ENCODE measurements at regions of chr15 and their contacts with region 1.

Region 1: DNA sequence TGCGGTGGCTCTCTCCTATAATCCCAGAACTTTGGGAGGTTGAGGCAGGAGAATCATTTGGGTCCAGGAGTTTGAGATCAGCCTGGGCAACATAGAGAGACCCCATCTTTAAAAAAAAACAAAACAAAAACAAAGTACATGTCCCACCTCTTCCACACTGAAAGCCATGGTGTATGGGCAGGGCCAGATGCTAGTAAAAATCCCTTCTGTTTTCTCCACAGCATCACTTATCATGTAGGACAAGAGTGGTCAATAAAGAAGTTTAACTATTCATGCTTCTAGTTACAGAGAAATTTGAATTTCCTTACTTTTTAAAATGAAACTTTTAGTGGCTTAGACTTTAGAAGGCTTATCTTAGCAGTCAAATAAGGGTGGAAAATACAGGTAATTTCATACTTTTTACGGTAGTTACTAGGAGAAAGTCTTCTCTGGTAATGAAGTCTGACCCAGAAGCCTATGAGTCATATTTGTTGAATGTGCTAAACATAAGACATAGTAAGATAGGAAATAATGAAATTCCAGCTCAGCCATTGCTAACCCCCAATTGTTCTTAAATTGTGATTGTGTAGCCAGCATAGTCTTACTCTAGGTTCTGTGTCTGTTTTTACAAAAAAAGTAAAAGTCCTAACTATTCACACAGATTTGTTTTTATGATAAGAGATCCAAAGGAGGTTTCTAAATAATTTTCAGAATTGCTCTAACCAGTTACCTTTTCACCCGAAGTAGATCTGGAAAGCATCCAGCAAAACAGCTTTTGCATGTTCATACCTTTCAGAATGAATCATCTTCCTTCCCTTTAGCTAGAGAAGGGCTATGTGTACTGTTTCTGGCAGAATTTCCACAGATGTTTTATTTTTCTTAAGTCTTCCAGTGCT is 16.4 kb upstream of the ZNF609 start:
- DNase-seq: no peak
- H3K4me3 Mint-ChIP-seq: peak overlapping the region; percentile 74
- H3K27ac Mint-ChIP-seq: peak overlapping the region; percentile 94
- H3K4me1 Mint-ChIP-seq: peaks cover 49% of the 10 kb centered on the region
- H3K27me3 Mint-ChIP-seq: no peaks in the 10 kb centered on the region

Region 2: GRCh38 chr15:64430000-64430735 is 13.8 kb before region 1 on chr15:
- intact Hi-C with region 1: loop called (anchors 1 kb)
- DNase-seq: peak; percentile 50
- H3K4me3 Mint-ChIP-seq: peak overlapping the region; percentile 72
- H3K27ac Mint-ChIP-seq: peak overlapping the region; percentile 89
- H3K4me1 Mint-ChIP-seq: peaks cover 31% of the 10 kb centered on the region
- H3K27me3 Mint-ChIP-seq: no peaks in the 10 kb centered on the region

Region 3: GRCh38 chr15:64536244-64536836 is 92.4 kb after region 1 on chr15:
- intact Hi-C with region 1: loop called (anchors 1 kb)
- DNase-seq: no peak
- H3K4me3 Mint-ChIP-seq: peak overlapping the region; percentile 13
- H3K27ac Mint-ChIP-seq: peak overlapping the region; percentile 66
- H3K4me1 Mint-ChIP-seq: peaks cover 38% of the 10 kb centered on the region
- H3K27me3 Mint-ChIP-seq: no peaks in the 10 kb centered on the region

Region 4: DNA sequence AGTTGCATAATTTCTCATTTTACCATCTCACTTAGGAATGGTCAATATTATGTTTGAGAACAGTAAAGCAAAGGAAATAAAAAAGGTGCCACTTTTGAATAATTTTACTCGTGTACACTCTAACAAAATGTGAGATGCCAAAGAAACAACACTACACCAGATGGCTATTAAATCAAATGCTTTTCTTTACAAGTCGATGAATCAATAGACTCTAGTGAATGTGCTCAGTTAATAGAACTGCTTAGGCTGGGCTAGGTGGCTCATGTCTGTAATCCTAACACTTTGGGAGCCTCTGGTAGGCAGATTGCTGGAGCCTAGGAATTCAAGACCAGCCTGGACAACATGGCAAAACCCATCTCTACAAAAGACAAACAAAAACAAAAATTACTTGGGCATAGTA is 104.3 kb after region 1 on chr15:
- intact Hi-C with region 1: no loop called
- DNase-seq: no peak
- H3K4me3 Mint-ChIP-seq: no peak overlapping the region
- H3K27ac Mint-ChIP-seq: no peak overlapping the region
- H3K4me1 Mint-ChIP-seq: peaks cover 4% of the 10 kb centered on the region
- H3K27me3 Mint-ChIP-seq: no peaks in the 10 kb centered on the region

Region 5: DNA sequence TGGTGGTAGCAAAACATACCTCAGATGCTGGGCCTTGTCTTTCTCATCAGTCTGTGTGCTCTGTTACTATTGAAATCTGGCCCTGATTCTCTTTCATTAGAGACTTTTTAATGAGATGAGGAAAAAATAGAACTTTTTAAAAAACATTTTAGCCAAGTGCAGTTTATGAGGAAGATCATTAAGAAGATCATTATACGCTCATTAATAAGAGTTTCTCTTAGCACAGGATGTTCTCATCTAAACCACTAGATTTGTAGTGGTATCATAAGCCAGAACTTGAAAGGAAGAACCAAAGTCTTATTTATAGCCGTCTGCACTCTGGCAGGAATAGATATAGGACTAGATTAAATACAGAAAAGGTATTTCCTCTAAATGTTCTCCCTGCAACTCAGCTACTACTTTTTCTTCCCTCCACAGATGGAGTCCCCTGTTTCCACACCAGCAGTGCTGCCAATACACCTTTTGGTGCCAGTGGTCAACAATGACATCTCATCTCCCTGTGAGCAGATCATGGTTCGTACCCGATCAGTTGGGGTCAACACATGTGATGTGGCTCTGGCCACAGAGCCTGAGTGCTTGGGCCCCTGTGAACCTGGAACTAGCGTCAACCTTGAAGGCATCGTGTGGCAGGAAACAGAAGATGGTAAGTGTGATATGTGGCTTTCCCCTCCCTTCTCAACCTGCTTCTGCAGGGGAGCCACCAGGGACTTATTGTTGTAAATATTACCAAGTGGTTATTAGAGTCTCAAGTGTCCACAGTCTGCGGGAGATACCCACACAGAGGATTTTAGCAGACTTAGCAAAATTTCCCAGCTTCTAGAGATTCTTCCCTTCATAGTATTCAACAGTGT is 178.7 kb after region 1 on chr15:
- intact Hi-C with region 1: loop called (anchors 5 kb)
- DNase-seq: peak; percentile 48
- H3K4me3 Mint-ChIP-seq: peak overlapping the region; percentile 53
- H3K27ac Mint-ChIP-seq: peak overlapping the region; percentile 80
- H3K4me1 Mint-ChIP-seq: peaks cover 76% of the 10 kb centered on the region
- H3K27me3 Mint-ChIP-seq: no peaks in the 10 kb centered on the region

Region 6: GRCh38 chr15:64702816-64703646 is 259.0 kb after region 1 on chr15:
- intact Hi-C with region 1: loop called (anchors 5 kb)
- DNase-seq: peak; percentile 93
- H3K4me3 Mint-ChIP-seq: peak overlapping the region; percentile 82
- H3K27ac Mint-ChIP-seq: peak overlapping the region; percentile 78
- H3K4me1 Mint-ChIP-seq: peaks cover 51% of the 10 kb centered on the region
- H3K27me3 Mint-ChIP-seq: peaks cover under 1% of the 10 kb centered on the region